BJ (cell line): ENCODE measurements at regions of chr11 and their contacts with region 1.

Region 1: GRCh38 chr11:4181782-4182721 is 87.5 kb downstream of the RRM1 start:
- DNase-seq: no peak
- H3K4me3 ChIP-seq: no peak overlapping the region
- H3K27me3 ChIP-seq: no peaks in the 10 kb centered on the region
- CTCF ChIP-seq: peak; percentile 89

Region 2: DNA sequence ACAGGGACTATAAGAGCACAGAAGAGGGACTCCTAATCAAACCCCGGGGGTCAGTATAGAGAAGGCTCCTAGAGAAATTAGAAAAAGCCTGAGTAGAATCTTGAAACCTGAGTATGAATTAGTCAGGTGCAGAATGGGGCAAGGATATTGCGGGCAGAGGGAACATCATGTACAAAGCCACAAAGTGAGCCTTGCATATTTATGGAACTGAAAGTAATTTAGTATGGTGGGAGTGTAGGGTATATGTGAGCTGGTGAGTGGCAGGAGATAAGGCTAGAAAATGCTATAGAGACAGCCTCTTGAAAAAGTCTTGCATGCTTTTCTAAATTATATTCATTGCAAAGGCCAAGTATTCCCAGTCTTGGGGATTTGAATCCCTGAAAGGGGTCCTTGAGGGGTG is 232.9 kb before region 1 on chr11:
- CTCF ChIA-PET with region 1: no interaction called
- POLR2A ChIA-PET with region 1: no interaction called
- DNase-seq: no peak
- H3K4me3 ChIP-seq: no peak overlapping the region
- H3K27me3 ChIP-seq: no peaks in the 10 kb centered on the region
- CTCF ChIP-seq: no peak

Region 3: DNA sequence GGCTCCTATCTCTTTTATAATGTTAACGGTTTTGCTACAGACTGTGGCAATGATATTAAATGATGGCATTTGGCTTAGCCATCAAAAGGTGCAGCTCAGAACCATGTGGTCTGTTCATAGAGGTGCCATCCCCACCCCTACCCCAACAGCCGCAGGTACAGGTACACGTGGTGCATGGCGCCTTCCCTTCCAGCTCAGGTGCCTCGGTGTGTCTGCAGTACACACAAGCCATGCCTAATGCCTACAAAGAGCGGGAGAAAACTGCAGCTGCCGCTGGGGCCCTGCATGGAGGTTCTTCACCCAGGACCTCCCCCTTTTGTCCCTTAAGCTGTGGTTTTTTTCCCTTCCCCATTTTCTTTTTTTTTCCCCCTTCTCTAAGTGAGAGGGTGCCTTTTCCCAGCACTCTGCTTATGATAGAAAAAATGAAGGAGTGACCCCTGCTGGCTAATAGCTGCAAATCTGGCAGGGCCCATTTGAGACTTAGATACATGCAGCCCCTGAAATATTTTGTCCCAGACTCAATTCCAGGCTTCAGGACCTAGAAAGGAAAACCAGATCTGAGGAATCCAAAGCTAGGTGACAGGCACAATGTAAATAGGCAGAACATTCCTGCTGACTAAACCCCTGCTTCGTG is 369.4 kb after region 1 on chr11:
- CTCF ChIA-PET with region 1: interaction called, 23 read pairs
- POLR2A ChIA-PET with region 1: no interaction called
- DNase-seq: no peak
- H3K4me3 ChIP-seq: no peak overlapping the region
- H3K27me3 ChIP-seq: no peaks in the 10 kb centered on the region
- CTCF ChIP-seq: peak; percentile 39